Prostate gland (tissue), 2 donors: ENCODE measurements at regions of chr1 and their contacts with region 1.

Region 1: GRCh38 chr1:10796019-10796944 is at the start of gene CASZ1:
- DNase-seq: peak; percentile 89
- H3K4me3 ChIP-seq: peak within 1 kb of the TSS; percentile 68 to 85
- H3K27ac ChIP-seq: peak within 1 kb of the TSS; percentile 92 to 96
- H3K4me1 ChIP-seq: peaks cover 7% of the 10 kb centered on the region
- H3K27me3 ChIP-seq: no peaks in the 10 kb centered on the region
- CTCF ChIP-seq: peak in 2 of 4 experiments; percentile 22 to 40
- POLR2A ChIP-seq: peak; percentile 85
- total RNA-seq, gene CASZ1: 90.9 to 96.9 TPM

Region 2: DNA sequence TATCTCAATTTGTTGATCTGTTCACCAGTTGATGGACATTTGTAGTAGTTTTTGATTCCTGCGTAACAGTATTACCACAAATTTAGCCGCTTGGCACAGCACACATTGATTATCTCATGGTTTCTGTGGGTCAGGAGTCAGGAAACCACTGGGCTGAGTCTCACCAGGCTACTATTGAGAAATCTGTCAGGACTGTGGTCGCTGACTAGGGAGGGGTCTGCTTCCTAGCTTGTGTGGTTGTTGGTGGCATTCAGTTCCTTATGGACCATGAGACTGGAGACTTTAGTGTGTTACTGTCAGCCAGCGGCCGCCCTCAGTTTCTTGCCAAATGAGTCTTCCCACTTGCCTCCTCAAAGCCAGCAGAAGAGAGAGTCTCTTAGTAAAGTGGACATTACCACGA is 311.8 kb before region 1 on chr1:
- intact Hi-C with region 1: no loop called
- DNase-seq: no peak
- H3K4me3 ChIP-seq: no peak overlapping the region
- H3K27ac ChIP-seq: no peak overlapping the region
- H3K4me1 ChIP-seq: no peaks in the 10 kb centered on the region
- H3K27me3 ChIP-seq: no peaks in the 10 kb centered on the region
- CTCF ChIP-seq: no peak
- POLR2A ChIP-seq: no peak

Region 3: DNA sequence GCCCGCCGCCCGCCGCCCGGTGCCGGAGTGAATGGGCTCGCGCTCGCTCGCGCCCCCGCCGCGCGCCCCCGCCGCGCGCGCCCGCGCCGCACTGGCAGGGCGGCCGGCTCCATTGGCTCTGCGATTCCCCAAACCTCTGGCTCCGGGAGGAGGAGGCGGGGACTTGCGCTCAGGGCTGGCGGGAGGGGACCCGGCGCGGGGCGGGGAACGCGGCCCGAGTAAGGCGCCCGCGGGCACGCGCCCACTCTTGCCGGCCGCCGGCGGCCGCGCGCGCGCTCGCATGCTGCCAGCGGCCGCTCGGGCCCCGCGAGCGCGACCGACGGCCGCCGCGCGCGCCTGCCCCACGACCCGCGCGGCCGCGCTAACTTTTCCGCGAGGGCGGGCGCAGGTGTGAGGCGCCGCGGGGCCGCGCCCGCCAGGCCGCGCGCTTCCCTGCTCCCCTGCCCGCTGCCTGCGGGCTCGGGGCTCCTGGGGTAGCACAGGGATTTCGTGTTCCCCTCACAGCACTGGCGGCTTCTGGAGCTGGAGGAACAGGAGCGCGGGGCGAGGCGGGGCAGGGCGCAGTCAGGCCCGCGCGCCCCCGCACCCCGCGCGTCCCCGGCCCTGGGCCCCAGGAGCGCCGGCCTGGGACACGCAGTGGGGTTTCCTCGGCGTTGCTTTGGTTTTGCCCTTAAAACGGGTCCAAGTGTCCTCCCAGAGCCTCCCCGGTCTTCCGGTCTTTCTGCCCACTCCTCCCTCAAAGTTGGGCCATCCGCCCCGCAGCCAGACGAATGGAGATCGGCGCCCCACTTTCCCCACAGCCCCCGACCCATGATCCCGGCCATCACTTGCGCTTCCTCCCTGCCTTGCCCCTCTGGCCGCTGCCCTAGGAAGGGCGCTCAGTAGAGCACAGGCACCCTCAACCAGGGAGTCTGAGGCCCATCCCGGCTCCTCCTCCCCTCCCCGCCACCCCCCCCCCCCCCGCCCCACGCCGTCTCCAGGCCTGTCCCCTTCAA is 101.4 kb before region 1 on chr1:
- intact Hi-C with region 1: loop called (anchors 5 kb)
- DNase-seq: peak; percentile 91
- H3K4me3 ChIP-seq: peak overlapping the region; percentile 43 to 67
- H3K27ac ChIP-seq: peak overlapping the region; percentile 91 to 94
- H3K4me1 ChIP-seq: peaks cover 40% of the 10 kb centered on the region
- H3K27me3 ChIP-seq: no peaks in the 10 kb centered on the region
- CTCF ChIP-seq: peak in 1 of 4 experiments; percentile 5
- POLR2A ChIP-seq: no peak